ENCODE measurements at regions of chrX and their contacts with region 1.

Region 1: DNA sequence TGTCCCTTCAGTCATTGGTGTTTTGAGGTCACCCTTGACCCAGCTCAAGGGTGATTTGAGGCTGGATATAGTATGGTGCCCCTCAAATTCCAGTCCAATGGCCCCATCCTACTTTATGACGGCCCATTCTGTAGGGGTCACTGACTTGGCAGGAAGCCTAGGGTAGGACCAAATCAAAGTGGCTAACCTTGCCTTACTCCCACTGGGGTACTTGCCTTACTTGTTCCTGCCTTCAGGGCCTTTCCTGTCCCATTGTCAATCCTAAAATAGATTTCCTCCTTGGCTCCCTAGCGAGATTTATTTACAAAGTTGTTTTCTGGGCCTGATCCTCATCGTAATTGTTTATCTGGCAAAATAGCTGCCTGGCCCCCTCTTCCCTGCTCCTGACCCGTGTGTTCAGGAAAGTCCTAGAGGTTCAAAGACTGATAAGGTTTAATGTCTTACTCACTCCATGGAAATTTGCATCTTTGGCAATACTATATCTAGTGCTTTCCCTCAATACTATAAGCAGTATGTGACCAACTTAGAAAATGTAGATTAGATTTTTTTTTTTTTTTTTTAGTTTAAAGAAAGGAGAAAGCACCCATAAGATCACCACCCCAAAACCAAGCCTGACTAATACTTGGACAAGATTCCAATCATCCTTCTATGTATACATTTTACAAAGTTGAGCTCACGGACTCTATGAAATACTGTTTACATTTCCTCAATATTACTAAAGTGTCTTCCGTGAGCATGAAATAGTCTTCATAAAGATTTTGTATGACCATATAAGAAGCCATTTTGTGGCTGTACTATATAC is 44.8 kb downstream of the MSN start:
- DNase-seq: no peak
- H3K4me3 ChIP-seq: no peak overlapping the region
- H3K27ac ChIP-seq: peak overlapping the region in 1 of 2 donors; percentile 76
- H3K4me1 ChIP-seq: peaks cover 0 to 6% (median 0%) of the 10 kb centered on the region in 3 donors
- H3K27me3 ChIP-seq: no peaks in the 10 kb centered on the region
- CTCF ChIP-seq: no peak

Region 2: GRCh38 chrX:65522739-65523372 is 189.3 kb before region 1 on chrX:
- intact Hi-C with region 1: no loop called
- DNase-seq: no peak
- H3K4me3 ChIP-seq: no peak overlapping the region
- H3K27ac ChIP-seq: no peak overlapping the region
- H3K4me1 ChIP-seq: no peaks in the 10 kb centered on the region
- H3K27me3 ChIP-seq: no peaks in the 10 kb centered on the region
- CTCF ChIP-seq: no peak

Region 3: GRCh38 chrX:65582450-65583082 is 129.6 kb before region 1 on chrX:
- intact Hi-C with region 1: no loop called
- DNase-seq: no peak
- H3K4me3 ChIP-seq: no peak overlapping the region
- H3K27ac ChIP-seq: no peak overlapping the region
- H3K4me1 ChIP-seq: no peaks in the 10 kb centered on the region
- H3K27me3 ChIP-seq: no peaks in the 10 kb centered on the region
- CTCF ChIP-seq: no peak

Region 4: GRCh38 chrX:65595460-65595876 is 116.7 kb before region 1 on chrX:
- intact Hi-C with region 1: loop called (anchors 10 kb)
- DNase-seq: peak; percentile 90 to 95 (median 92)
- H3K4me3 ChIP-seq: no peak overlapping the region
- H3K27ac ChIP-seq: peak overlapping the region in 1 of 2 donors; percentile 84
- H3K4me1 ChIP-seq: no peaks in the 10 kb centered on the region
- H3K27me3 ChIP-seq: no peaks in the 10 kb centered on the region
- CTCF ChIP-seq: peak; percentile 95